ENCODE measurements at regions of chr12 and their contacts with region 1.

Region 1: DNA sequence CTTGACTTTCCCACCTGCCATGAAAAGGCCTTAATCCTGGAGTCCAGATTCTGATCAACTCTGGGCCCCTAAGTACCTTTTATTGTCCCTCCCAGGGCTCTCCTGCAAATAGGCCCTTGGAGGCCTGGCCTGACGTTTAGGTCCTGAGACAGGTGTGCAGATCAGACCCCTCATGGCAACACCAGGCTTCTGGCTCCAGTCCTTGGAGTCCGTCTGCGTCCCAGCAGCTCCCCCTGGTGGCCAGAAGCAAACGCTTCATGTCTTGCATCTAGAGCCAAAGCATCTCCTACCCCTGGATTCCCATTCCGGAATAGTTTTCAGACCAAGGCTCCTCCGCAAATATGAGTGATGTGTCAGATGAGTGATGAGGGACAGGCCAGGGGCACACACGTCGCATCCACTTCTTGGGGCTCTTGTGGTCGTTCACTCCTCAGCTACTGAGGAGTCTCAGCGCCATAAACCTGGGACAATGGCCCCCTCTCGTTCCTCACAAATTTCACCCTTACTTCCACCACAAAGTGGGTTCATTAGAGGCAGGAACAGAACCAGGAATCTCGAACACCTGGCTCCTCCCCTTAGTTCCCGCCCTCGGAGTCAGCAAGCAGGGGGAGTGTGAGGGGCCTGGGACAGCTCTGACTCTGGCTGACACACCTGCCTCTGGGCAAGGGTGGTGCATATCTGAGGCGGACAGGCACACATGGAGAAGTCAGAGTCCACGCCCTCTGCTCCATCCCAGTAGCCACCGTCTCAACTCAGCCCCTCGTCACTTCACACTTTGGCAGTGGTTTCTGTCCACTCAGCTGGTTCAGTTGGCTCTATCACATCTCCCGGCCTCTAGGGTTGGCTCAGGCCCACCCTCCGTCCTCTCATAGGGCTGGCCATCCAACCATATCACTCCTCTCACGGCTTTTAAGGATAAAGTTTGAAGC is 77.9 kb upstream of the PWP1 start:
- DNase-seq: peak; percentile 94

Region 2: DNA sequence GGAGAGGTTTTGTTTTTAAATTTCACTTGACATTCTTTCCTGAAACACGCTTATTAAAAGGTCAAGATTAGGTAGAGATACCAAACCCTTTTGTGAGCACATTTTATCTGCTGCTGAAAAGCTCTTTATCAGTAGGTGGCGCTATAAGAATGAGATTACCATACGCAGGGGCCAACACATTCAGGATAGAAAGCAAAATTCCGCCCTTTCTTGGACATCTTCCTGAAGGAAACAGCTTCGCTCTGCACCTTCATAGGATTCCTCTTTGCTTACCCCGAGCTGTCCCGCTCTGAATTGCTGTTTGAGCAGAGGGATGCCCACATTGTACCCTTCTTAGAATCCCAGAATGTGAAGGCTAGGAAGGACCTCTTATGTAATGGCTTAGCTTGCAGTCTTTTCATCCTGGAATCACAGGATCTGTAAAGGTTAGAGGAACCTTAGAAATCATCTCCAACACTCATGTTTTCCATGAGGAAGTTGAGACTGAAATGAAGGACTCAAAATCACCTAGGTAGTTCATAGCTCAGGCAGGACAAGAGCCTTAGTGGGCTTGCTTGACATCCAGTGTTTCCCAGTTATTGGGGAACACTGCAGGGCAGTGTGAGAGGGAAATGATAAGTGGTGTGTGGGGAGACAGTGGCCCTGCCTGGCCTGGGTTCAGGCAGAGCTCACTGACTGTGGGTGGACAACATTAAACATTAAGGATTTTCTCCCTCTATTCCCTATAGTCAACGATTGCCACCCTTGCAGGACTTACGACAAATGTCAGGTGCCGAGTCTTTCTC is 475.7 kb before region 1 on chr12:
- intact Hi-C with region 1: loop called (anchors 5 kb)
- DNase-seq: no peak

Region 3: DNA sequence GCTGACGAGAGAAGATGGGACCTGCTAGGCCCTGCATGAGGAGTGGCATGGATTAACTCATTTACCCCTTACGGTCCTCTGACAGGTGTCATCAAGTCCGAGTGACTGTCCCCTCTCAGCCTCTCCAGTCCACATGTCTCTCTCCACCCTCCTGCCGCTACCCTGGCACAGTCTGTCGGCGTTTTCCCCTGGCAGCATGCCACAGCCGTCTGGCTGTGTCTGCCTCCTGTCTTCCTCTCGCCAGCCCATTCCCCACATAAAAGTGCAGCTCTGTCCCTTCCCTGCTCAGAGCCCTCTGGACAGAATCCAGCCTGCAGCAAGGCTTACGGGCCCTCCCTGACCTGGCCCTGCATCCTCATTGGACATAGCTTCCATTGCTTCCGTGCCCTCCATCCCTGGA is 1915.3 kb after region 1 on chr12:
- intact Hi-C with region 1: loop called in 1 of 2 experiments (anchors 5 kb)
- DNase-seq: peak; percentile 62